Panc1 (cell line): ENCODE measurements at regions of chr3 and their contacts with region 1.

Region 1: GRCh38 chr3:178915365-178915764 is 156.2 kb downstream of the ZMAT3 start:
- DNase-seq: no peak
- ATAC-seq: no peak
- H3K4me3 ChIP-seq: no peak overlapping the region
- H3K27ac ChIP-seq: no peak overlapping the region
- H3K4me1 ChIP-seq: no peaks in the 10 kb centered on the region
- H3K27me3 ChIP-seq: no peaks in the 10 kb centered on the region
- CTCF ChIP-seq: 0 out of 2 replicates have a peak, but pooled peaks have one; percentile 5

Region 2: GRCh38 chr3:178490913-178491312 is 424.5 kb before region 1 on chr3:
- CTCF ChIA-PET with region 1: interaction called, 10 read pairs
- POLR2A ChIA-PET with region 1: no interaction called
- in situ Hi-C with region 1: no loop called
- intact Hi-C with region 1: no loop called
- DNase-seq: no peak
- ATAC-seq: no peak
- H3K4me3 ChIP-seq: no peak overlapping the region
- H3K27ac ChIP-seq: no peak overlapping the region
- H3K4me1 ChIP-seq: no peaks in the 10 kb centered on the region
- H3K27me3 ChIP-seq: no peaks in the 10 kb centered on the region; the same call in 1 of the 2 replicates
- CTCF ChIP-seq: no peak

Region 3: GRCh38 chr3:178900029-178900646 is 15.2 kb before region 1 on chr3:
- CTCF ChIA-PET with region 1: no interaction called
- POLR2A ChIA-PET with region 1: no interaction called
- in situ Hi-C with region 1: no loop called
- intact Hi-C with region 1: no loop called
- DNase-seq: no peak
- ATAC-seq: no peak
- H3K4me3 ChIP-seq: no peak overlapping the region
- H3K27ac ChIP-seq: no peak overlapping the region
- H3K4me1 ChIP-seq: no peaks in the 10 kb centered on the region
- H3K27me3 ChIP-seq: no peaks in the 10 kb centered on the region
- CTCF ChIP-seq: no peak